ENCODE measurements at regions of chr11 and their contacts with region 1.

Region 1: DNA sequence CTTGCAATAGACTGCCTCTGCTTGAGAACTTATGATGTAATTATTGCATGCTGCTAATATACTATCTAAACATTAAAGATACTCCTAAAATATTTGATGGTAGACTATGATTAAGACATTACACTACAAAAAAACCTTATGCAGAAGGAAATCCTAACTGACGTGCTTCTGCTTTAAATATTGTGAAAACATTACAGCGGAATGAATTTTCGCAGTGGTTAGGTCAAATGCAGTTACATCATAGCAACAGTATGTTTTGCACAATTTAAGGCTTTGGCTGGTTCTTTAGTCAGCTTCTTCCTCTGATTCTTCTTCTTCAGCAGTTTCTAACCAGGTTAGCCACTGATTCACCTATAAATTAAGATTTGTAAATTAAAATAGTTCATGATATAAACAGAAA is 11.2 kb downstream of the EIF4G2 start:
- DNase-seq: no peak
- ATAC-seq: no peak
- H3K4me3 ChIP-seq: no peak overlapping the region
- H3K27ac ChIP-seq: no peak overlapping the region
- H3K4me1 ChIP-seq: peaks cover 44% of the 10 kb centered on the region
- H3K27me3 ChIP-seq: no peaks in the 10 kb centered on the region
- CTCF ChIP-seq: no peak

Region 2: DNA sequence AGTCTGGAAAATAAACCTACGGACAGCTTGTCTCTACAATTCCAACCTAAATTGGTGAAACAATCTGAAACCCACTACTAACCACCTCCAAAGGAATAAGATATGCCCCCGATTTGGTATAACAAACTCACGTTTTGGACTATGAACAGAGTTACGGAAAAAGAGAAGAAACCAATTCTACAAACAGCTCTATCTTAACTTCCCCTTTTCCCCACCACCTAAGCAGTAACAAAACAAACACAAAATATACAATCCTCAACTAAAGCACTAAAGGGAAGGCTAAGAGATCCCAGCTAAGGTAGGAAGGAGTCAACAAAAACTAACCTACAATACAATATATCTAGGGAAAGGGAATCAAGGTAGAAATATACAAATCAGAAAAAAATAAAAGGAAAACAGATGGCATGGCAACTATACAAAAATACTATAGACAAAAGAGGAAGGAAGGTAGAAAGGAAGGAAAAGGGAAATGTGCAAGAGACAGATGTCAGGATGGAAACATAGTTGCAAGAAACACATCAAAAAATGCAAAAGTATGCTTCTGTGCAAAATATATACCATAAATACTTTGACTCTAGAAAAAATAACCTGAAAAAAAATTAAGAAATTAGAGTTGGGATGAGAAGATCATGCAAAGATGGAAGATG is 185.2 kb before region 1 on chr11:
- CTCF ChIA-PET with region 1: no interaction called
- POLR2A ChIA-PET with region 1: no interaction called
- in situ Hi-C with region 1: no loop called
- intact Hi-C with region 1: no loop called
- DNase-seq: no peak
- ATAC-seq: no peak
- H3K4me3 ChIP-seq: no peak overlapping the region
- H3K27ac ChIP-seq: no peak overlapping the region
- H3K4me1 ChIP-seq: no peaks in the 10 kb centered on the region
- H3K27me3 ChIP-seq: peaks cover 40% of the 10 kb centered on the region
- CTCF ChIP-seq: no peak

Region 3: DNA sequence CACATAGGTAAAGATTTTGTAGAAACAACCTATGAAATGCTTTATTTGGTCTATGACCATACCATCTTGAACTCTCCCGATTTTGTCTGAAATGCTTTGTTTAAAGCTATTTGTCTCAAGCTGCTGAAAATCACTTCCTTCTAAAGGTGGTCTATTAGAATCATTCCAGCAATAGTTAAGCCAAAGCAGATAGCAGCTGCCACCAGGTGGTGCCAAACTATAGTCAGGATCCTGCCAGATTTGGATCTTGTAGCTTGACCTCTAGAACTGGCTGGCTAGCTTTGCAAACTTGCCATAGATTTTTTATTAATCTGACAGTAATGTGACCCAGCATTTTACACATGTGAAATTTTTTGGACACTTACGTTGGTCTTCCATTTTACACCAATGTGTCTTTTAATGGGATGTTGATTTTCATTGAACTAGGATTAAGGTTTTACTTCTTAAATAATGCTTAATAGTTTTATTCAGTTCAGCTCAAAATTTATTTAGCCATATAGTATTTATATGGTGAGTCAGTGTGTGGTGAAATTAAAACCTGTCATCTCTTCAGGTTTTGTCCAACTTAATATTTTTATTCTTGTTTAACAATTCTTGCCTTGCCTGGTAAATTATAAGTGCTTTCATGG is 26.8 kb before region 1 on chr11:
- CTCF ChIA-PET with region 1: interaction called, 10 read pairs
- POLR2A ChIA-PET with region 1: interaction called, 3 read pairs
- in situ Hi-C with region 1: no loop called
- intact Hi-C with region 1: no loop called
- DNase-seq: peak; percentile 51
- ATAC-seq: peak; percentile 92
- H3K4me3 ChIP-seq: no peak overlapping the region
- H3K27ac ChIP-seq: no peak overlapping the region
- H3K4me1 ChIP-seq: no peaks in the 10 kb centered on the region
- H3K27me3 ChIP-seq: no peaks in the 10 kb centered on the region
- CTCF ChIP-seq: peak; percentile 96

Region 4: DNA sequence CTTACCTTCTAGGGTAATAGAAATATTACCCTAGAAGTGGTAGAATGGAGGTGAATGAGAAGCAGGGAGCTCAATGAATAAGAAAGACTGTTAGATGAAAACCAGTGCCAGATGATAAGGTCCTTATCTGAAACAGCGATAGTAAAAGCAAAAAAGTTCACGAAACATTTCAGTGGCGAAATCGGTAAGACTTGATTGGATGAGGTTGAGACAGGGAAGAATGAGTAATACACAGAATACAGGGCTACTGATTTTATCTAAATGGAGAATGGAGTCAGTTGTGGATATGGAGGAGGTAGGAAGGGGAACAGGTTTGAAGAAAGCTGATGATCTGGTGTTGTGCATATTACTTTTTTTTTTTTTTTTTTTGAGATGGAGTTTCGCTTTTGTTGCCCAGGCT is 727.8 kb after region 1 on chr11:
- CTCF ChIA-PET with region 1: no interaction called
- POLR2A ChIA-PET with region 1: interaction called, 10 read pairs
- in situ Hi-C with region 1: no loop called
- intact Hi-C with region 1: no loop called
- DNase-seq: no peak
- ATAC-seq: no peak
- H3K4me3 ChIP-seq: no peak overlapping the region
- H3K27ac ChIP-seq: no peak overlapping the region
- H3K4me1 ChIP-seq: no peaks in the 10 kb centered on the region
- H3K27me3 ChIP-seq: no peaks in the 10 kb centered on the region
- CTCF ChIP-seq: no peak